Activated naive CD4-positive, alpha-beta T cell treated with anti-CD3 and anti-CD28 coated beads for 36 hours (primary cell): ENCODE measurements at regions of chr11 and their contacts with region 1.

Region 1: DNA sequence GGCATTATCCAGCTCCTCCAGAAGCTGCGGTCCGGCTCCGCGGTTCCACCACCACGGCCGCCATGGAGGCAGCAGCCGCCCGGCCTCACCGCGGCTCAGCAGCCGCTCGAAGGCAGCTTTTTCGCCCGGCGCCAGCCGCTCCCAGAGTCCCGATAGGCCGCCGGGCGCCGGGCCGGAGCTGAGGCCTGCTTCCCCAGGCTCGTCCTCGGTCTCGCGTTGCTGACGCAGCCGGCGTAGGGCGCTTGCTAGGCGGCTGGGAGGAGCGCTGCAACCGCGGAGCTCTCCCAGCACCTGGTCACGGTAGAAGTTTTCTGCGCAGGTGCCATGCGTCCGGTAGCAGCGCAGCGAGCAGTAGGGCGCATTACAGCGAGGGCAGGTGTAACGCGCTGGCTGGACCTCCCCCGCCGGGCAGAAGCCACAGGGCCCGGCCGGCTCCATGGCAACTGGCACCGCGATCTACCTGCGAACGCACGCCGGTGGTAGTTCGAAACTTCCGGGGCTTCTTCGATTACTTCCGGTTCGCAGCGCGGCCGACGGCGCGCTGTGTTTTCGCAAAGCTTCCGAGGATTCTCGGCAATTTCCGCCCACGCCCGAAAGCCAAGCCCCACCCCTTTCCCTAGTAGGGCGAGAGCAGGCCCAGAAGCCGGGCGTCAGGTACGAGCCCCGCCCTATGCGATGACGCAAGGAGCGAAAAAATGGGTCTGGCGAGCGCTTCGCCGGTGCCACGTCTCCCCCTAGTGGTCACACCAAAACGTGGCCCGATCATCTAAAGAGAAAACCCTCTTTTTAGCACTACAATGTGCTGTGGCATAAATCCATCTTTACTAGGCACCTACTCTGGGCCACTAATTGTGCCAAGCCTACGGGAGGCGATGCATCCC is at the start of gene ZNHIT2:
- DNase-seq: peak; percentile 100
- H3K4me3 Mint-ChIP-seq: peak within 1 kb of the TSS; percentile 87
- H3K27ac Mint-ChIP-seq: peak within 1 kb of the TSS; percentile 87
- H3K4me1 Mint-ChIP-seq: peaks cover 66% of the 10 kb centered on the region
- H3K27me3 Mint-ChIP-seq: no peaks in the 10 kb centered on the region
- total RNA-seq, gene ZNHIT2: 5.6 to 6.1 TPM

Region 2: GRCh38 chr11:64803163-64803845 is 314.2 kb before region 1 on chr11 and contains the start of gene MAP4K2:
- CTCF ChIA-PET with region 1: no interaction called
- intact Hi-C with region 1: loop called (anchors 2 kb)
- DNase-seq: peak; percentile 88
- H3K4me3 Mint-ChIP-seq: peak within 1 kb of the TSS; percentile 81
- H3K27ac Mint-ChIP-seq: peak within 1 kb of the TSS; percentile 89
- H3K4me1 Mint-ChIP-seq: peaks cover 31% of the 10 kb centered on the region
- H3K27me3 Mint-ChIP-seq: no peaks in the 10 kb centered on the region
- total RNA-seq, gene MAP4K2: 69.5 to 73.9 TPM

Region 3: DNA sequence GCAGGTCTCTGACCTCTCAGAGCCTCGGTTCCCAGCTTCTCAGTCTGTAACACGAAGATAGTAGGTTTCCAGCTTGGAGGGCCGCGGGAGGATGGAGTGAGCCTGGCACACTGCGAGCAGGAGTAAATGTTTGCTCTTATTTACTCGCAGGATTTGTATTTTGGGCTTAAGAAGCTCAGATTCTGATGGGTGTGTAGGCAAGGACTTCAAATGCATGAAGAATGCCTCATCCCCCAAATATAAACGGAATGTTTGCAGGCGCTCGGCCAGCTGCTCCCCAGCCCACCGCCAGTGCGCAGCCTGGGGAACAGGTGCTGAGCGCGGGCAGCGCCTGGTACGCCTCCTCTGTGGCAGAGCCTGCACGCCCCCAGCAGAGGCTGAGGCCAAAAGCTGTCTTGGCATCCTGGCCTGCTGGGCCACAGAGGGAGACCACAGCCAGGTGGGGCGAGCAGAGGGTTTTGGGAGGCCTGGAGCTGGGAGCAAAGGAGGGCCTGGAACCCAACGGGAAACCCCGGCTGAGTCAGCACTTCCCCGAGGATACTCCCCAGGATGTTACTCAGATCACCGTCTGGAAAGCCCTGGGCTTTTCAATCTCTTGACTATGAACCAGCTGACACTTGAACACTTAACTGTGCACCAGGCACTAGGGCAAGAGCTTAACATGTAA is 248.4 kb before region 1 on chr11:
- CTCF ChIA-PET with region 1: no interaction called
- intact Hi-C with region 1: no loop called
- DNase-seq: peak; percentile 72
- H3K4me3 Mint-ChIP-seq: peak overlapping the region; percentile 59
- H3K27ac Mint-ChIP-seq: peak overlapping the region; percentile 89
- H3K4me1 Mint-ChIP-seq: peaks cover 92% of the 10 kb centered on the region
- H3K27me3 Mint-ChIP-seq: no peaks in the 10 kb centered on the region

Region 4: GRCh38 chr11:64916775-64917662 is 200.4 kb before region 1 on chr11 and contains the start of gene ATG2A:
- CTCF ChIA-PET with region 1: no interaction called
- intact Hi-C with region 1: loop called (anchors 2 kb)
- DNase-seq: peak; percentile 99
- H3K4me3 Mint-ChIP-seq: peak within 1 kb of the TSS; percentile 87
- H3K27ac Mint-ChIP-seq: peak within 1 kb of the TSS; percentile 81
- H3K4me1 Mint-ChIP-seq: peaks cover 25% of the 10 kb centered on the region
- H3K27me3 Mint-ChIP-seq: no peaks in the 10 kb centered on the region
- total RNA-seq, gene ATG2A: 15.1 to 16.3 TPM

Region 5: DNA sequence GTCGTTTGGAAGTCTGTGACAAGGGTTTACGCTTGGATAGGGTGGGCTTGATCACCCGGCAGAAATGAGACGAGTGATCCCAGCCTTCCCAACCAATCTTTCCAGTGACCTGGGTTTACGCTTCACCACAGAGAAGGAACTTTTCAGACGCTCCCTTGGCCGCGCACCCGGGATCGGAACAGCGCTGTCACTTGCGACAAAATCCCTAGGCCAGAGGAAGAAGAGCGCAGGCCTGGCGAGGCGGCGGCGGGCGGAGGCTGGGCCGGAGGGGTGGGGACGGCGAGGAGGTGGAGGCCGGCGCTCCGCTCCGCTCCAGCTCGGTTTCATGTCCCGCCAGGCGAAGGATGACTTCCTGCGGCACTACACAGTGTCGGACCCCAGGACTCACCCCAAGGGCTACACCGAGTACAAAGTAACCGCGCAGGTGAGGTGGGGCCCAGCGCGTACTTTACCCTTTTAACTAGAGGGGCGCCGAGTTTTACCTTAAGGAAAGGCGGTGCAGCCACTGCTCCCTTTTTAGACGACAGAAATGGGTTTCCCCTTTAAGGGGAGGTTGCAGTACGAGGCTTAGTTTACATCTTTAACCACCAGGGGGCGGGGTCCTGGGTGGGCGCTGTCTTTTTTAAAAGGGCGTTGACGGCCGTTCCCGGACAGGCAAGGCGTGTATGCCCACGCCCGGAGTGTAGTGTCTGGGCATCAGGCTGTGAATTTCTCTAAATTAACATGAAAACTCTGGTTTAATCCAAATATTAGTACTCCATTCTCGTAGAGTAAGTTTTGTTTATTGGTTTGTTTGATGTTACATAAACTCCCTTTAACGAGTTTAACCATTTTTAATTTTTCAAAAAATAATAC is 90.0 kb before region 1 on chr11 and contains the start of gene SNX15:
- CTCF ChIA-PET with region 1: interaction called, 4 read pairs
- intact Hi-C with region 1: loop called (anchors 1 kb)
- DNase-seq: peak; percentile 95
- H3K4me3 Mint-ChIP-seq: peak within 1 kb of the TSS; percentile 79
- H3K27ac Mint-ChIP-seq: peak within 1 kb of the TSS; percentile 82
- H3K4me1 Mint-ChIP-seq: peaks cover 19% of the 10 kb centered on the region
- H3K27me3 Mint-ChIP-seq: no peaks in the 10 kb centered on the region
- total RNA-seq, gene SNX15: 8.9 to 9.4 TPM

Region 6: DNA sequence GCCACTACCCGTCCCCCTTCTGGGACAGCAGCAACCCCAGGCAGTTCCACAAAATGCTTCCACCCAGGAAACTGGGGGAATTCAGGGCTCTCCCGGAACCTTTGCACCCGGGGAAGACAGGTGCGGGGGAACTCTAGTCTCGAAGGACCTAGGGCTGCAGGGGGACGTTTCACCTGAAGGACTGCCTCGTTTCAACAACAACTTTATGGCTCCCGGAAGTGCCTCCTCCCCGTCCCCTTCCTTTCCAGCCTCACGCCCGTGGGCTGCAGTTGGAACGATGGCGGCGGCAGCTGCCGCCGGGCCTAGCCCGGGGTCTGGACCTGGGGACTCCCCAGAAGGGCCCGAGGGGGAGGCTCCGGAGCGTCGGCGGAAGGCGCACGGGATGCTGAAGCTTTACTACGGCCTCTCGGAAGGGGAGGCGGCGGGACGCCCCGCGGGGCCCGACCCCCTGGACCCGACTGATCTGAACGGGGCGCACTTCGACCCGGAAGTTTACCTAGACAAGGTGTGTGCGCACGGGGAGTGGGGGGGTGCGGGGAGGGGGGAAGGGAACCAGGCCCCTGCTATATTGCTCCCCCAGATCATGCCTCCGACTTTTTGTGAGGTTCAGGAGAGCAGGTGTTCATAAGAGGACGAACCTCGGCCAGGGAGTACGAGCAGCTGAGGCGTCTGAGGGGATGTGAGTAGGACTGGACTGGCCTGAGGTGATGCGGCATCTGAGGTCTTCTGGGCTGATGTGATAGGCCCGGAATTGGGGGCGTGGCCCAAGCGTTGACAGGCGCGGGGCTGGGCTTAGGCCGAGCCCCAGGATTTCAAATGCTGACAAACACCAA is 21.3 kb before region 1 on chr11 and contains the start of gene VPS51:
- CTCF ChIA-PET with region 1: interaction called, 41 read pairs
- intact Hi-C with region 1: loop called (anchors 1 kb)
- DNase-seq: peak; percentile 90
- H3K4me3 Mint-ChIP-seq: peak within 1 kb of the TSS; percentile 94
- H3K27ac Mint-ChIP-seq: peak within 1 kb of the TSS; percentile 95
- H3K4me1 Mint-ChIP-seq: peaks cover 17% of the 10 kb centered on the region
- H3K27me3 Mint-ChIP-seq: no peaks in the 10 kb centered on the region
- total RNA-seq, gene VPS51: 90.8 to 96.0 TPM

Region 7: GRCh38 chr11:65180877-65181568 is 63.6 kb after region 1 on chr11:
- CTCF ChIA-PET with region 1: interaction called, 3 read pairs
- intact Hi-C with region 1: loop called (anchors 2 kb)
- DNase-seq: peak; percentile 59
- H3K4me3 Mint-ChIP-seq: peak overlapping the region; percentile 80
- H3K27ac Mint-ChIP-seq: no peak overlapping the region
- H3K4me1 Mint-ChIP-seq: peaks cover 15% of the 10 kb centered on the region
- H3K27me3 Mint-ChIP-seq: no peaks in the 10 kb centered on the region